HEK293 (cell line): ENCODE measurements at regions of chr7 and their contacts with region 1.

Region 1: DNA sequence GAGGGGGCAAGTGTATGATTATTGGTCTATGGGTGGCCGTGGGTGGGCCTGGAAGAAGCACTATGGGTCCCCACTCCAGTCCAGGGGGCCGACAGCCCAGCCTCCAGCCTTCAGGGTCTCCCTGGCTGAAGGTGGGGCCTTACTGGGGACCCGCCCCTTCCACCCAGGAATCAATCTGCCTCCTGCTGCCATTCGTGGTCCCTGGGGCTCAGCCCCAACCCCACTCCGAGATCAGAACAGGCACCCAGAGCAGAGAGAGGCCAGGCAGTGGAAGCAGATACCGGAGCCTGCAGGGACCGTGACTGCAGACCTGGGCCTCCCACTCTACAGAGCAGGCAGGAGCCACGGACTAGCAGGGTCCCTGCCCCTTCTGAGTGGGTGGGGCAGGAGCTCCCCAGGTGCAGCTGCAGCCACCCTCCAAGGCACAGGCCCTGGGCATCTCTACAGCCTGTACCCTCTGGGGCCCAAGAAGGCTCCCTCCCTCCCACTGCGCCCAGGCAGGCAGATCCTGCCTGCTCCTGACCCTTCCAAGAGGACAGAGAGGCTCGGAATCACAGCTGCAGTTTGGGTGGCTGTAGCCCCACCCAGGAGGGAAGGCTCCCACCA is 13.6 kb upstream of the FOXL3 start:
- H3K4me3 ChIP-seq: no peak overlapping the region
- H3K27ac ChIP-seq: no peak overlapping the region
- H3K4me1 ChIP-seq: no peaks in the 10 kb centered on the region
- CTCF ChIP-seq: no peak

Region 2: DNA sequence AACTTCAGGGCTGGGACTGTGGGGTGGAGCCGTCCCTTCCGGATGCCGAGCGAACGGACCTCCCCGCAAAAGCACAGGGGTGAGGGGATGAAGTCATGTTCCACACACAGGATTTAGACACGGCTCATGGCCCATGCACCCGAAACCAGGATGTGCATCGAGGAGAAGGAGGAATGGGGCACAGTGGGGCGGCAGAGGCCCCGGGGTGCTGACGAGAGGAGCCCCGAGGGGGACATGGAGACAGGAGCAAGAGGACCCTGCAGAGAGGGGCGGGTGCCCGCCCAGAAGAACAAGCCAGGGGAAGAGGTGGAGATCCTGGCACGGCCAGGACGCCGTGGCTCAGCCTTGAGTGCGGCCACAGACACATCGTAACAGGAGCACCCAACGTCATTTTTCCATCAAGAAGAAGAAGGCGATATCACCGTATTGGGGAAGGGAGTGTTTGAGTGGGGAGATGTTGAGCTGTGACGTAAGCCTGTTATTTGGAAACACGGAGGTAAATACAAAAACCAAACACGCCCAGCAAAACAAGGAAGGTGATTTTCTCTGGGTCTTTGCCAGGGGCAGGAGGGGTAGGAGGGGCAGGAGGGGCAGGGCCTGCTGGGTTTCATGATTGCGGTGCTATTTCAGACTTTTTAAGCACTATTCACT is 11.7 kb before region 1 on chr7:
- CTCF ChIA-PET with region 1: interaction called, 12 read pairs
- POLR2A ChIA-PET with region 1: no interaction called
- H3K4me3 ChIP-seq: no peak overlapping the region
- H3K27ac ChIP-seq: no peak overlapping the region
- H3K4me1 ChIP-seq: no peaks in the 10 kb centered on the region
- CTCF ChIP-seq: no peak

Region 3: GRCh38 chr7:379456-380138 is 103.3 kb after region 1 on chr7:
- CTCF ChIA-PET with region 1: no interaction called
- POLR2A ChIA-PET with region 1: no interaction called
- H3K4me3 ChIP-seq: no peak overlapping the region
- H3K27ac ChIP-seq: no peak overlapping the region
- H3K4me1 ChIP-seq: no peaks in the 10 kb centered on the region
- CTCF ChIP-seq: no peak